CD8-positive, alpha-beta T cell (primary cell): ENCODE measurements at regions of chr5 and their contacts with region 1.

Region 1: DNA sequence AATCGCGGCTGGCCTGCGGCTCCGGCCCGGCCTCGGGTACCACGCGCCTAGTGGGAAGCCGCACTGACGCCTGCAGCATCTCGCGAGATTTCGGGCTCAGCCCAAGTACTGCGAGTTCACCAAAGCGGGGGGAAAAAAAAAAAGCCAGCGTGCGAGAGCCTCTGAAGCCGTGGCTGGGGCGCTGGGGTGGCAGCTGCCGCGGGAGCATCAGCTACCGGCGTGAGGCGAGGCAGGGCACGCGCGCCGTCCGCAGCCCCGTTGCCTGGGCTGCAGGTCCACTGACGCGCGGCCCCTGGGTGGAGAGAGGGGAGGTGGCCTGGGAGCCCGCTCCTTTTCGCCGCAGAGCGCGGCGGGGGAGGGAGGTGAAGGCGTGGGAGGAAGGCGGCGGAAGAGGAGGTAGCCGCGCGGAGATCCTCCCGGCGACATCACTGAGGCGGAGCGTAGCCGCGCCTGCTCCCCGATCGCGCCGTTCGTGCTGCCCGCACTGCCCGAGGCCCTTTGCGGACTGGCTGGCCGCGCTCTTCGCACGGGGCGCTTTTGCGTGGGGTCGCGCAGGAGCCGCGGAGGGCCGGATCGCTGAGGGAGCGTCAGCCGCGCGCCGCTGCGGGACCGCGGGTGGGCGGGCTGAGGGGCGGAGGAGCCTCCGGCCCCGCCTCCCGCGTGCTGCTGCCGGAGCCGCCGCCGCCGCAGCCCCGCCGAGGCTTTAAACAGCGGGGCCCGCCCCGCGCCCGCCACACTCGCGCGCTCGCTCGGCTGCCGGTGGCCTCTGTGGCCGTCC is at the start of gene SLC12A2:
- DNase-seq: peak; percentile 81 to 98 (median 91)
- ATAC-seq: peak; percentile 69
- H3K4me3 ChIP-seq: peak within 1 kb of the TSS; percentile 73 to 86
- H3K4me3 Mint-ChIP-seq: peak within 1 kb of the TSS; percentile 93
- H3K27ac ChIP-seq: peak within 1 kb of the TSS; percentile 89 to 90
- H3K27ac Mint-ChIP-seq: peak within 1 kb of the TSS; percentile 95
- H3K4me1 ChIP-seq: peaks cover 48% of the 10 kb centered on the region
- H3K4me1 Mint-ChIP-seq: peaks cover 70% of the 10 kb centered on the region
- H3K27me3 ChIP-seq: no peaks in the 10 kb centered on the region
- H3K27me3 Mint-ChIP-seq: no peaks in the 10 kb centered on the region
- CTCF ChIP-seq: no peak
- total RNA-seq, gene SLC12A2: 12.6 to 12.8 TPM

Region 2: DNA sequence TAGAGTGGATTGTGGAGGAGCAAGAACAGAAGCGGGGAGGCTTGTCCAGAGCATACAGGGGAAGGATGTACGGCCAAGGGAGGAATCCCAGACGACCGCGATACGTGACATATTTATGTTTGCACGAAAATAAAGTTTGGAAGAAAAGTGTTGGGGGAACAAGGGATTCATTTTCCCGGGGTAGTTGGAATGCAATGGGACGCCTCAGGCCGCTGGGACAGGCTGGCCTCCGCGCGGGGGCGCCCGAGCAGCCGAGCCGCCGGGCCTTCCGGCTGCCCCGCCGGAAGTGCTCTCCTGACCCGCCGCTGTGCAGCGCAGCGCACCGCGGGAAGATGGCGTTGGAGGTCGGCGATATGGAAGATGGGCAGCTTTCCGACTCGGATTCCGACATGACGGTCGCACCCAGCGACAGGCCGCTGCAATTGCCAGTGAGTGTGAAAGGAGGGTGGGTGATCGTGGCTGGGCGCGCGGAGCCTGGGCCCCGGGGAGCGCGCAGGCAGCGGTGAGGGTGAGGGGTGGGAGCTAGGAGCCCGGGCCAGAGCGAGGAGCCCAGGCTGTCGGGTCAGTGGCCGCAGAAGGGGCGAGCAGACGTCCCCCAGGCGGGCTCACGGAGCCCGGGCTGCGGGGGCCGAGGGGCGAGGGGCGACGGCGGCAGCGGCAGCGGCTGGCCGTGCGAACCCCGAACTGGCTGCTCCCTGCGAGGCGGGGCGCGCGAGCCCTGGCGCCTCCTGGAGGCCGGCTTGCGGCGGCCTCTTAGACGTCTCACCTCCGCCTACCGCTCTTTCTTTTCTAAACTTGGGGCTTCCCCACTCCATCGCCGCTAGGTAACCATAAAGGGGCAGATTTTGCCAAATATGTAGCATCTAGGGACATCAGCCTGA is 1482.4 kb before region 1 on chr5 and contains the start of gene PHAX:
- CTCF ChIA-PET with region 1: no interaction called
- POLR2A ChIA-PET with region 1: no interaction called
- intact Hi-C with region 1: loop called in 1 of 2 experiments (anchors 10 kb)
- DNase-seq: peak; percentile 47 to 87 (median 70)
- ATAC-seq: peak; percentile 94
- H3K4me3 ChIP-seq: peak within 1 kb of the TSS; percentile 88 to 98
- H3K4me3 Mint-ChIP-seq: peak within 1 kb of the TSS; percentile 98
- H3K27ac ChIP-seq: peak within 1 kb of the TSS; percentile 83 to 85
- H3K27ac Mint-ChIP-seq: peak within 1 kb of the TSS; percentile 96
- H3K4me1 ChIP-seq: peaks cover 29% of the 10 kb centered on the region
- H3K4me1 Mint-ChIP-seq: peaks cover 33% of the 10 kb centered on the region
- H3K27me3 ChIP-seq: no peaks in the 10 kb centered on the region
- H3K27me3 Mint-ChIP-seq: no peaks in the 10 kb centered on the region
- CTCF ChIP-seq: peak; percentile 66
- total RNA-seq, gene PHAX: 29.4 to 32.8 TPM

Region 3: GRCh38 chr5:127517480-127518318 is 565.5 kb before region 1 on chr5 and contains the start of gene PRRC1:
- CTCF ChIA-PET with region 1: no interaction called
- POLR2A ChIA-PET with region 1: interaction called, 3 read pairs
- intact Hi-C with region 1: loop called (anchors 1 to 5 kb)
- DNase-seq: peak; percentile 53 to 90 (median 81)
- ATAC-seq: peak; percentile 96
- H3K4me3 ChIP-seq: peak within 1 kb of the TSS; percentile 91 to 98
- H3K4me3 Mint-ChIP-seq: peak within 1 kb of the TSS; percentile 90
- H3K27ac ChIP-seq: peak within 1 kb of the TSS; percentile 75 to 76
- H3K27ac Mint-ChIP-seq: peak within 1 kb of the TSS; percentile 80
- H3K4me1 ChIP-seq: peaks cover 11% of the 10 kb centered on the region
- H3K4me1 Mint-ChIP-seq: peaks cover 37% of the 10 kb centered on the region
- H3K27me3 ChIP-seq: no peaks in the 10 kb centered on the region
- H3K27me3 Mint-ChIP-seq: peaks cover 8% of the 10 kb centered on the region
- CTCF ChIP-seq: no peak
- total RNA-seq, gene PRRC1: 30.4 to 37.3 TPM

Region 4: DNA sequence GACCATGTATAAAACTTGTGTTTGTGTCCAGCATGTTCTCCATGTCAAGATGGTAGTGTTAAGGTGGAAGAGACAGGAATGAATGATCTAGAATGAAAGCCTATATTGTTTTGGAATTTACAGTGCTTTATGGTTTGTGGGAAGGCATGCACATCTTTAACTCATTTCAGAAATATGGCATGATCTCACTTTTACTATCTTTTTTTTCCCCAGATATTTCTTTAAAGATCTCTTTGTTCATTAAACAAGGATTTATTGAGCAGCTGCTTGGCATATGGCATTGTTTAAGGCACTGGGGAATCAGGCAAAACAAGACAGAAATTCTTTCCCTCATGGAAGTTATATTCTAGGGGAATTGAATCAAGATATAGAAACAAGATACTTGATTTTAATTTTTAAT is 52.1 kb after region 1 on chr5:
- CTCF ChIA-PET with region 1: no interaction called
- POLR2A ChIA-PET with region 1: no interaction called
- intact Hi-C with region 1: loop called in 1 of 2 experiments (anchors 5 kb)
- DNase-seq: no peak
- ATAC-seq: no peak
- H3K4me3 ChIP-seq: no peak overlapping the region
- H3K4me3 Mint-ChIP-seq: no peak overlapping the region
- H3K27ac ChIP-seq: no peak overlapping the region
- H3K27ac Mint-ChIP-seq: no peak overlapping the region
- H3K4me1 ChIP-seq: no peaks in the 10 kb centered on the region
- H3K4me1 Mint-ChIP-seq: no peaks in the 10 kb centered on the region
- H3K27me3 ChIP-seq: no peaks in the 10 kb centered on the region
- H3K27me3 Mint-ChIP-seq: no peaks in the 10 kb centered on the region
- CTCF ChIP-seq: no peak

Region 5: DNA sequence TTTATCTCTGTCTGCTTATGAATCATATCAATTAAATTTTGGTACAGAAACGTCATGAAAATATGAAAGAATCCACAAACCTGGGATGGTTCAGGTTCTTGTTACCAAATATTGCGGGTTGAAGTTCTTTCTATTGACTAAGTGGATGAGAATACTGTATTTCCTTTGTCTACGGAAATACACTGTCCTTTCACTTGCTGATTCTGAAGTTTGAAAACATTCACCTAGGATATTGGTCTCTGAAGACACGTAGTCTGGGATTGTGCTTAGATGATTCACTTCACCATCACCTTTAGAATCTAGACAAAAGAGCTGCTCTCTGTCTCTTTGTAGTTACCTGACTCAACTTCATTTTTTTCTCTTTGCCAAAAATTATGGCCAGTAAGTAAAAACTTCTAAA is 232.4 kb after region 1 on chr5:
- CTCF ChIA-PET with region 1: no interaction called
- POLR2A ChIA-PET with region 1: no interaction called
- intact Hi-C with region 1: no loop called
- DNase-seq: no peak
- ATAC-seq: no peak
- H3K4me3 ChIP-seq: no peak overlapping the region
- H3K4me3 Mint-ChIP-seq: no peak overlapping the region
- H3K27ac ChIP-seq: no peak overlapping the region
- H3K27ac Mint-ChIP-seq: no peak overlapping the region
- H3K4me1 ChIP-seq: no peaks in the 10 kb centered on the region
- H3K4me1 Mint-ChIP-seq: no peaks in the 10 kb centered on the region
- H3K27me3 ChIP-seq: no peaks in the 10 kb centered on the region
- H3K27me3 Mint-ChIP-seq: no peaks in the 10 kb centered on the region
- CTCF ChIP-seq: no peak

Region 6: DNA sequence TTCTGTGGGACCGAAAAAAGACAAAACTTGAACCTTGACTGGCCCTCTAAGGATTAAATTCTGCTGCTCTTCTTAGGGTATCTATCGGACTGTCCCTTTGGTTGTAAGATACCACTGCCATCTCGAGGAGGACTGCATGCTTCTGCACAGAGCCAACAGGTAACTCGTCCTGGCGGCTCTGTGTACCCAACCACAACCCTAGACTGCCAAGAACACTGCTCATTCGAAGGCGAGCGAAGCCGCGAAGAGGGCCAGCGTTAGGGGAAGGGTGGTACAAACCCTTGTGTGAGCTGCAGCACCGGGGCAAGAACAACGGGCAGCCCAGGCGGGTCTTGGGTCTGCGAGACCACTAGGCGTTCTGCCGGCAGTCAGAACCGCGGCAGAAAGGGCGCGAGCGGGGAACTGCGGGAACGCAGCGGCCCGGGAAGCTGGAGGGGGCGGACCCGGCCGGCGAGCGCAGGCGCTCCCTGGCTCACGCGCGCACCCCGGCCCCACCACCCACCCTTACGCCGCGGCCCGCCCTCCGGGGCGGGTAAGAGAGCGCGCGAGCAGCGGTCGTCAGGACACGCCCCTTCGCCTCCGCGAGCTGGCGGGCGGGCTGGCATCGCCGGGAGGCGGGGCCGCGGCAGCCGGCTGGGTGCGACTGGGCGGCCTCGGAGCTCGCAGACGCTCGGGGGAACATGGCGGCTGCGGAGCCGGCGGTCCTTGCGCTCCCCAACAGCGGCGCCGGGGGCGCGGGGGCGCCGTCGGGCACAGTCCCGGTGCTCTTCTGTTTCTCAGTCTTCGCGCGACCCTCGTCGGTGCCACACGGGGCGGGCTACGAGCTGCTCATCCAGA is 1011.1 kb after region 1 on chr5 and contains the start of gene ISOC1:
- CTCF ChIA-PET with region 1: no interaction called
- POLR2A ChIA-PET with region 1: interaction called, 5 read pairs
- intact Hi-C with region 1: loop called (anchors 1 to 5 kb)
- DNase-seq: peak; percentile 83 to 97 (median 90)
- ATAC-seq: peak; percentile 91
- H3K4me3 ChIP-seq: peak within 1 kb of the TSS; percentile 86 to 88
- H3K4me3 Mint-ChIP-seq: peak within 1 kb of the TSS; percentile 91
- H3K27ac ChIP-seq: peak within 1 kb of the TSS; percentile 74
- H3K27ac Mint-ChIP-seq: peak within 1 kb of the TSS; percentile 86
- H3K4me1 ChIP-seq: peaks cover 35% of the 10 kb centered on the region
- H3K4me1 Mint-ChIP-seq: peaks cover 37% of the 10 kb centered on the region
- H3K27me3 ChIP-seq: no peaks in the 10 kb centered on the region
- H3K27me3 Mint-ChIP-seq: peaks cover 15% of the 10 kb centered on the region
- CTCF ChIP-seq: peak; percentile 41
- total RNA-seq, gene ISOC1: 9.7 to 9.8 TPM